MCF 10A (cell line): ENCODE measurements at regions of chr11 and their contacts with region 1.

Region 1: GRCh38 chr11:65314501-65315203 is at the start of gene CDC42EP2:
- DNase-seq: peak; percentile 81
- H3K4me3 Mint-ChIP-seq: peak within 1 kb of the TSS; percentile 85
- H3K27ac Mint-ChIP-seq: peak within 1 kb of the TSS; percentile 83
- H3K4me1 Mint-ChIP-seq: peaks cover 36% of the 10 kb centered on the region
- H3K27me3 Mint-ChIP-seq: no peaks in the 10 kb centered on the region
- CTCF ChIP-seq: no peak
- total RNA-seq, gene CDC42EP2: 24.5 and 35.0 TPM in 2 replicates

Region 2: GRCh38 chr11:65261591-65262380 is 52.9 kb before region 1 on chr11 and contains the start of gene POLA2:
- CTCF ChIA-PET with region 1: interaction called, 63 read pairs
- POLR2A ChIA-PET with region 1: interaction called, 17 read pairs
- intact Hi-C with region 1: no loop called
- DNase-seq: peak; percentile 96
- H3K4me3 Mint-ChIP-seq: peak within 1 kb of the TSS; percentile 81
- H3K27ac Mint-ChIP-seq: peak within 1 kb of the TSS; percentile 95
- H3K4me1 Mint-ChIP-seq: peaks cover 9% of the 10 kb centered on the region
- H3K27me3 Mint-ChIP-seq: no peaks in the 10 kb centered on the region
- CTCF ChIP-seq: no peak
- total RNA-seq, gene POLA2: 8.8 and 10.3 TPM in 2 replicates

Region 3: DNA sequence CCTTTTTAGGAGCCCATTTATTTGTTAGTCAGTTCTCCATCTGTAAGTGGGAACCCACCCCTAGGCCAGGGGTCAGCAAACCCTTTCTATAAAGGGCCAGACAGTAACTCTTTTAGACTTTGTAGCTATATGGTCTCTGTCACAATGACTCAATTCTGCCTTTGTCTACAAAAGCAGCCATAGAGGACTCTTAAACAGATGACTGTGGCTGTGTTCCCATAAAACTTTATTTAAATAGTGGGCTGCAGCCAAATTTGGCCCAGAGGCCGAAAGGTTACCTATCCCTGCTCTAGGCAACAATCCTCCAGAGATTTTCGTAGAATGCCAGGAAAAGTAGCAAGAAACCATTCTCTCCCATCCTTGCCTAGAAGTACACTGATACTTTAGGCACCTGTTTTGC is 32.8 kb before region 1 on chr11:
- CTCF ChIA-PET with region 1: interaction called, 335 read pairs
- POLR2A ChIA-PET with region 1: interaction called, 143 read pairs
- intact Hi-C with region 1: no loop called
- DNase-seq: no peak
- H3K4me3 Mint-ChIP-seq: no peak overlapping the region
- H3K27ac Mint-ChIP-seq: no peak overlapping the region
- H3K4me1 Mint-ChIP-seq: peaks cover 12% of the 10 kb centered on the region
- H3K27me3 Mint-ChIP-seq: no peaks in the 10 kb centered on the region
- CTCF ChIP-seq: no peak

Region 4: DNA sequence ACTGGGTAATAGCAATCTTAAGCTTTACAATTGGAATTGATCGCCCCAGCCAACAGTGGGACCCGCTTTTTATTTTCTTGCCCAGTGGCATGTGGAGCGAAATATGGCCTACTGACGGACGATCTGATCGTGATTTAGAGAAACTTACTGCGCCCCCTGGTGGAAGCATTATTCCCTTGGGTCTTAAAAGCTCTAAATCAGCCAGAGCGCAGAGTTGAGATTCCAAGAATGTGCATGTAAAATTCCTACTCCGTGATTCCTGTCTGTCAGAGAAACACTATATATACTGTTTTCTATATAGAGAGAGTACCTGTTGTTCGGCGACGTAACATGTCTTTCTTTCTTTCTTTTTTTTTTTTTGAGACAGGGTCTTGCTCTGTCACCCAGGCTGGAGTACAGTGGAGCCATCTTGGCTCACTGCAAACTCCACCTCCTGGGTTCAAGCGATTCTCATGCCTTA is 15.3 kb after region 1 on chr11:
- CTCF ChIA-PET with region 1: interaction called, 273 read pairs
- POLR2A ChIA-PET with region 1: interaction called, 57 read pairs
- intact Hi-C with region 1: loop called (anchors 1 kb)
- DNase-seq: peak; percentile 94
- H3K4me3 Mint-ChIP-seq: no peak overlapping the region
- H3K27ac Mint-ChIP-seq: peak overlapping the region; percentile 75
- H3K4me1 Mint-ChIP-seq: peaks cover 14% of the 10 kb centered on the region
- H3K27me3 Mint-ChIP-seq: no peaks in the 10 kb centered on the region
- CTCF ChIP-seq: peak; percentile 76

Region 5: DNA sequence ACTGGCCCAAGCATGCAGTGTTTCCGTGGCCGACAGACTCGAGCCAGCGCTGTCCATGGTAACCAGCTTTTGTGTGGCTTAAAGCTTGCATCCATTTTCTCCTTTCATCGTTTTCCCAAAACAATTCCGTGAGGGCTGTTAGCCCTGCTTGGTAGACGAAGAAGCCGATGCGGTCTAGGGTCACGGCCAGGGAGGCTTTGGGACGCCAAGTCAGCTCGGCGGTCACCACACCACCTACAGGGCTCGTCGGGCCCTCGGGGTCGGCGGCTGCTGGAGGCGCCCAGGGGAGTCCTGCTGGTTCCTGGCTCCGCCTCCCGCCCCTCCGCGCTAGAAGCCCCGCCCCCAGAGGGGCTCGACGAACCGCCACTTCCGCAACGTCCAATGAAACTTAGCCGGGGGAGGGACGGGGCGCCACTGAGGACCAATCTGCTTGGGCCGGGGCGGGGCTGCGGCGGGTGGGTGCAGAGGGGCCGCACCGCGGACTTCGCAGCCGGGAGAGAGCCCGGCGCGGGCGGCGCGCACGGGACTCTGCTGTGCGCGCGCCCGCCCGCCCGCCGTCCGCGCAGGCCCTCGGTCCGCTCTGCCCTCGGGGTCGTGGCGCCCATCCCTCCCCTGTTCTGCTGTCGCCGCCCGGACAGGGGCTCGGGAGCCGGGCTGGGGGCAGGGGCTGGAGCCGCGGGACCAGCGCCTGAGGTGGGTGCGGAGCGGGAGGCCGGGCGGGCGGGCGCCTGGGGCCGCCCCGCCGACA is 39.8 kb after region 1 on chr11 and contains the start of gene TIGD3:
- CTCF ChIA-PET with region 1: interaction called, 8 read pairs
- POLR2A ChIA-PET with region 1: interaction called, 4 read pairs
- intact Hi-C with region 1: loop called (anchors 2 kb)
- DNase-seq: peak; percentile 95
- H3K4me3 Mint-ChIP-seq: peak within 1 kb of the TSS; percentile 72
- H3K27ac Mint-ChIP-seq: no peak within 1 kb of the TSS
- H3K4me1 Mint-ChIP-seq: peaks cover 18% of the 10 kb centered on the region
- H3K27me3 Mint-ChIP-seq: no peaks in the 10 kb centered on the region
- CTCF ChIP-seq: no peak
- total RNA-seq, gene TIGD3: 0.14 TPM in 1 of 2 replicates, not detected in the other